ENCODE measurements at regions of chr10 and their contacts with region 1.

Region 1: GRCh38 chr10:43671656-43672531 is 23.2 kb upstream of the ZNF32 start:
- DNase-seq: peak in 1 of 2 donors; percentile 83
- ATAC-seq: peak in 2 of 3 donors; percentile 77 to 79
- H3K4me3 ChIP-seq: no peak overlapping the region
- H3K4me3 Mint-ChIP-seq: no peak overlapping the region
- H3K27ac ChIP-seq: no peak overlapping the region
- H3K27ac Mint-ChIP-seq: no peak overlapping the region
- H3K4me1 ChIP-seq: peaks cover 10% of the 10 kb centered on the region
- H3K4me1 Mint-ChIP-seq: peaks cover 10 to 11% of the 10 kb centered on the region in 2 donors
- H3K27me3 ChIP-seq: no peaks in the 10 kb centered on the region
- H3K27me3 Mint-ChIP-seq: peaks cover 20 to 28% of the 10 kb centered on the region in 2 donors
- CTCF ChIP-seq: peak; percentile 89

Region 2: GRCh38 chr10:43793704-43794103 is 121.8 kb after region 1 on chr10:
- intact Hi-C with region 1: no loop called
- DNase-seq: no peak
- ATAC-seq: no peak
- H3K4me3 ChIP-seq: no peak overlapping the region
- H3K4me3 Mint-ChIP-seq: no peak overlapping the region
- H3K27ac ChIP-seq: no peak overlapping the region
- H3K27ac Mint-ChIP-seq: no peak overlapping the region
- H3K4me1 ChIP-seq: no peaks in the 10 kb centered on the region
- H3K4me1 Mint-ChIP-seq: no peaks in the 10 kb centered on the region
- H3K27me3 ChIP-seq: no peaks in the 10 kb centered on the region
- H3K27me3 Mint-ChIP-seq: peaks cover 21 to 33% of the 10 kb centered on the region in 2 donors
- CTCF ChIP-seq: no peak

Region 3: GRCh38 chr10:44030143-44030542 is 358.2 kb after region 1 on chr10:
- intact Hi-C with region 1: loop called (anchors 1 kb)
- DNase-seq: peak in 1 of 2 donors; percentile 56
- ATAC-seq: peak; percentile 38 to 65 (median 44)
- H3K4me3 ChIP-seq: no peak overlapping the region
- H3K4me3 Mint-ChIP-seq: no peak overlapping the region
- H3K27ac ChIP-seq: no peak overlapping the region
- H3K27ac Mint-ChIP-seq: no peak overlapping the region
- H3K4me1 ChIP-seq: no peaks in the 10 kb centered on the region
- H3K4me1 Mint-ChIP-seq: no peaks in the 10 kb centered on the region
- H3K27me3 ChIP-seq: no peaks in the 10 kb centered on the region
- H3K27me3 Mint-ChIP-seq: peaks cover 11 to 17% of the 10 kb centered on the region in 2 donors
- CTCF ChIP-seq: peak; percentile 20

Region 4: DNA sequence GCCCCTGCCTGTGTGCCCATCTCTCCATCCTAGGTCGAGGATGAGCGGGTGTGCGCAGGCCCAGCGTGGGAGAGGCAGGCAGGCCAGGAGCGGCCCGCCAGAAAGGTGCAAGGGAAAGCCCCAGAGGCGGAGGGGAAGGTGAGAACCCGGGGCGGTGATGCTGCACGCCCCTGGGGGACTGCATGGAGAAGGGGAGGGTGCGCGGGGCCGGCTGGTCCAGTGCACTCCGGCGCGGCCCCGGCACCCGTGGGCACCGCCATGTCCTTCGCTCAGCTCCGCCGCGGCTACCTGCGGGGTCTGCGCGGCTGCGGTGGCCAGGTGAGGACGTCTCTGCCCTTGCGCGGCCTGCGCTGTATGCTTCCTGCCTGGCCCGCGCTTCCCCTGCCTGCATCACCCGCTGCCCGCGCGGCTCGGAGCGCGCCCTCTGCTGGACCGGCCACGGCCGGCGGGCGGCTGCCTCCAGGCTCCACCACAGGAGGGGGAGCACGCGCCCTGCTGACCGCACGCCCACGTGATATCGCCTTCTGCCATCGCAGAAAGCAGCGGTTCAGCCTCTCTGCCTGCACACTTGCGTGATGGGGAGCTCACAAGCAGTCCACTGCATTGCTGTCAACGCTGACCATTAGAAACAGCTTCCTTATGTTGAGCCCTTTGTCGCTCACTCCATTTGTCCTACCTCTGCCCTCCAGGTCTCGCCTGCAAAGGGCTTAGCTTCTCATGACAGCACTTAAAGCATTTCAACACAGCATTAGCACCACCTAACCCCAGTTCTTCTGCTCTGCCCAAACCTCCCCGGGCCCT is 639.1 kb after region 1 on chr10:
- intact Hi-C with region 1: loop called (anchors 5 kb)
- DNase-seq: peak; percentile 77 to 82
- ATAC-seq: peak; percentile 75 to 93 (median 92)
- H3K4me3 ChIP-seq: peak overlapping the region; percentile 38
- H3K4me3 Mint-ChIP-seq: peak overlapping the region; percentile 83
- H3K27ac ChIP-seq: peak overlapping the region; percentile 99
- H3K27ac Mint-ChIP-seq: peak overlapping the region; percentile 84 to 92
- H3K4me1 ChIP-seq: peaks cover 33% of the 10 kb centered on the region
- H3K4me1 Mint-ChIP-seq: peaks cover 22 to 31% of the 10 kb centered on the region in 2 donors
- H3K27me3 ChIP-seq: no peaks in the 10 kb centered on the region
- H3K27me3 Mint-ChIP-seq: peaks cover 11 to 12% of the 10 kb centered on the region in 2 donors
- CTCF ChIP-seq: peak; percentile 75

Region 5: DNA sequence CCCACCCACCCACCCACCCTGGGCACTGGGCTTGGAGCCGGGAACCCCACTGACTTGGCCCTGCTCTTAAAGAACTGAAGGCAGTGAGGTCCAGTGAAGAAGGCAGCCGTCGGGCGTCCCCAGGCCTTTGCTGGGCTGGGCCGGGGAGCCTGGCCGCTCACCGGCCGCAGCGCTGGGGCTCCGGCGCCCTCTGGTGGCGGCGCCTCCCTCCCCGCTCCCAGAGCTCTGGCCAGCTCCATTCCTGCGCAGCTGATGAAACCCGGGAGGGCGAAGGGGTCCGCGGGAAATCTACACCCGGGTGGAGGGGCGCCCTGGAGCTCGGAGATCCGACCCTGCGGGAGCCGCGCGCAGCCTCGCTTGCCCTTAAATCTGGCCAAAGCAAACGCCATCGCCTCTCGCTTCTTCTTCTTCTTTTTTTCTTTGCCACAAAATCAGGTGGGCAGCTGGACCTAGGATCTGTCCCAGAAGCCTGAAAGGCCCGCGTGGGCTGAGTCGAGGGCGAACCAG is 714.7 kb after region 1 on chr10:
- intact Hi-C with region 1: loop called (anchors 1 kb)
- DNase-seq: peak; percentile 43 to 55
- ATAC-seq: peak in 2 of 3 donors; percentile 65 to 81
- H3K4me3 ChIP-seq: no peak overlapping the region
- H3K4me3 Mint-ChIP-seq: peak overlapping the region; percentile 59
- H3K27ac ChIP-seq: no peak overlapping the region
- H3K27ac Mint-ChIP-seq: no peak overlapping the region
- H3K4me1 ChIP-seq: peaks cover 3% of the 10 kb centered on the region
- H3K4me1 Mint-ChIP-seq: no peaks in the 10 kb centered on the region
- H3K27me3 ChIP-seq: peaks cover 23% of the 10 kb centered on the region
- H3K27me3 Mint-ChIP-seq: peaks cover 33 to 34% of the 10 kb centered on the region in 2 donors
- CTCF ChIP-seq: peak; percentile 65

Region 6: DNA sequence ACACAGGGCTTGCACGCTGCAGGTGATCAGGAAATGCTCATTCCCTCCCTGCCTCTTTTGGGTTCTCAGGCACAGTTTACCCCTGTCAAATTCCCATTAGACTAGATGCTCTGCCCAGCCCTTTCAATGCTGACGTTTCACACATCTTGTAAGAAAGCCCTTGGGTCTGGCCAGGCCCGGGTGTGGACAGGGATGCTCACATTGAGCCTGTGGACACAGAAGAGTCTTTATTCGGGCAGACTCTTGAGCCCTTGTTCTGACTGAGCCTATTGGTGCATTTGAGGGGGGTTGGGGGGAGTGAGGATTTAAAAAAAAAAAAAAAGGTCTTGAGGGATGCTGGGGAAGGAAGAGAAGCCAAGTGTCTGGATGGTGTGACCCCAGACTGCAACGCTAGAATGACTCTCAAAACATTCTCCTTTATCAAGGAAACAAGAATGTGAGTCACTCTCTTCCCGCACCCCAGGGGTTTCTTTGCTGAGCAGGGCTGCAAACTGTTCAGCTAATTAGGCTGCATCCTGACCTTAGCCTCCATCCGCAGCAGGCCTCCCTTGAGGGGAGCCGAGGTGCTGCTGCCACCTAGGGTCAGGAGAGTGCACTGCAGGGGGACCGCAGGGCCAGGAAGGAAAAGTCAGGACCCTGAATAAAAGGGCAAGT is 1185.6 kb after region 1 on chr10:
- intact Hi-C with region 1: loop called (anchors 2 kb)
- DNase-seq: peak; percentile 44 to 68
- ATAC-seq: peak; percentile 71 to 96 (median 92)
- H3K4me3 ChIP-seq: no peak overlapping the region
- H3K4me3 Mint-ChIP-seq: no peak overlapping the region
- H3K27ac ChIP-seq: no peak overlapping the region
- H3K27ac Mint-ChIP-seq: no peak overlapping the region
- H3K4me1 ChIP-seq: no peaks in the 10 kb centered on the region
- H3K4me1 Mint-ChIP-seq: no peaks in the 10 kb centered on the region
- H3K27me3 ChIP-seq: no peaks in the 10 kb centered on the region
- H3K27me3 Mint-ChIP-seq: peaks cover 7% of the 10 kb centered on the region in 2 donors
- CTCF ChIP-seq: peak; percentile 93

Region 7: GRCh38 chr10:44864637-44865288 is 1192.9 kb after region 1 on chr10:
- intact Hi-C with region 1: loop called (anchors 1 kb)
- DNase-seq: peak; percentile 78 to 83
- ATAC-seq: peak; percentile 88 to 94 (median 89)
- H3K4me3 ChIP-seq: peak overlapping the region; percentile 40
- H3K4me3 Mint-ChIP-seq: peak overlapping the region; percentile 91
- H3K27ac ChIP-seq: no peak overlapping the region
- H3K27ac Mint-ChIP-seq: peak overlapping the region; percentile 29 to 65
- H3K4me1 ChIP-seq: peaks cover 14% of the 10 kb centered on the region
- H3K4me1 Mint-ChIP-seq: peaks cover 16% of the 10 kb centered on the region in 2 donors
- H3K27me3 ChIP-seq: peaks cover 13% of the 10 kb centered on the region
- H3K27me3 Mint-ChIP-seq: peaks cover 51 to 75% of the 10 kb centered on the region in 2 donors
- CTCF ChIP-seq: peak; percentile 96